ENCODE measurements at regions of chr2 and their contacts with region 1.

Region 1: GRCh38 chr2:159090514-159091201 is 122.2 kb downstream of the TANC1 start:
- DNase-seq: no peak
- H3K4me3 Mint-ChIP-seq: no peak overlapping the region
- H3K27ac Mint-ChIP-seq: no peak overlapping the region
- H3K4me1 Mint-ChIP-seq: peaks cover 35% of the 10 kb centered on the region
- H3K27me3 Mint-ChIP-seq: peaks cover under 1% of the 10 kb centered on the region

Region 2: DNA sequence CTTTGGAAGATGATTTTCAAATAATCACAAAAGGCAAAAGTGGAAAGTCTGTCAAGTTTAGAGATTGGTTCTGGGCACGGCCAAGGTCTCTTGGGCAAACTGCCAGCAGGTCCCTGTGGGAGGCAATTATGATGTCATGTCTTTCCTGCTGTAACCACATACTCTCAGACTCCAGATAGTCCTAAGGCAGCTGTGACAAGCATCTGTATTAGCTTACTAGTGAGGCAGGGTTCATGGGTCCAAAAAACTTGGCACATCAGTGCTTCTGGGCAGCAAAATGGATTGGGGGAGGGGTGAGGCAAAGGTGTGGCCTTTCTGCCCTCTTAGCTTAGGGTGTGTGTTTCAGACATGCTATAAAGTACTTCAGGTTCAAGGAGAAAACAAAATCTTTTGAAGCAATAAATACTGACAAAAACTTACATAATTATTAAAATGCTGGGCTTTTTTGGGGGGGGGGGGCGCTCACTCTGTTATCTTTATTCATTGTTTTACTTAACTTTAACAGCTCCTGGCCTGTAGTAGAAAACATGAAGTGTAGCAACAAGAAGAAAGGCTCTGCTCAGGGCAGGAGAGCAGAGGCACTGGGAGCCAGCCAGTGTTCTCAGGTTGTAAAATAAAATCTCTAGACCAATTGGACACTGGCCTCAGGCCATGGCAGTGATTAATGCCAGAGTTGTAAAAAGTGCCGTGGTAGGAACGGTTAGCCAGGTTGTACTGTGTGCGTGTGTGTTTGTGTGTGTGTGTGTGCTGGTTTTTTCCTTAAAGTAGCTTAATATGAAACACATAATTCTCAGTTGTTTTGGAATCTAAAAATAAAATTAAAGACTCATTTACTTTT is 136.5 kb before region 1 on chr2:
- CTCF ChIA-PET with region 1: no interaction called
- POLR2A ChIA-PET with region 1: no interaction called
- intact Hi-C with region 1: no loop called
- DNase-seq: peak; percentile 51
- H3K4me3 Mint-ChIP-seq: no peak overlapping the region
- H3K27ac Mint-ChIP-seq: no peak overlapping the region
- H3K4me1 Mint-ChIP-seq: peaks cover 7% of the 10 kb centered on the region
- H3K27me3 Mint-ChIP-seq: peaks cover 2% of the 10 kb centered on the region

Region 3: GRCh38 chr2:158969715-158970245 is 120.9 kb before region 1 on chr2:
- CTCF ChIA-PET with region 1: no interaction called
- POLR2A ChIA-PET with region 1: no interaction called
- intact Hi-C with region 1: loop called (anchors 10 kb)
- DNase-seq: no peak
- H3K4me3 Mint-ChIP-seq: peak overlapping the region; percentile 70
- H3K27ac Mint-ChIP-seq: no peak overlapping the region
- H3K4me1 Mint-ChIP-seq: peaks cover 15% of the 10 kb centered on the region
- H3K27me3 Mint-ChIP-seq: peaks cover 41% of the 10 kb centered on the region